ENCODE measurements at regions of chr14 and their contacts with region 1.

Region 1: DNA sequence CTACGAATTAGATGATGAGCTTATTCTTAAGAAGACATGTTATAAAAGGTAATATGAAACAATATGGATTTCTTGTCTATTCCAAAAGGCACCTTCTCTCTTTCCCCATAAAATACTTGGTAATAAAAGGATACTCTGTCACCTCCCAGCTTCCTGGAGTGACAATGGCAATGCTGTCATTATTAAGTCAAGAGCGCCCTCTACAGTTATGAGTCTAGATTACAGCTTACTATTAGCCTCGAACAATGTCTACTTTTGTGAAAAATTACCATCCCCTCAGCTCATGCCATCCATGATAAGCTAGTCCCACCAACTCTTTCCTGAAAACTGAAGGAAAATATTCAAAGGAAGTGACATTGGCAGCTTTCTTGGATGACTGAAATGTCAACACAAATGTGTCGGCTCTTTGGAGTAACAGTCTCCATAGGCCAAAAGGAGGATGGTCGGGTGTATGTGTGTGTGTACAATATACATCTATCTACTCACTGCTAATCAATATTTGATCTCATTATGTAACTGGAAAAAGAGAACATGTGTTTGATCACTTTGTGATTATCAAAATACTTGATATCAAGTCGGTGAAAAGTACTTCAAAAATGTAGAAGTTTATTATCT is 48.7 kb upstream of the CDKN3 start:
- DNase-seq: no peak
- ATAC-seq: peak in 1 of 2 donors; percentile 56

Region 2: GRCh38 chr14:53295985-53296582 is 1052.0 kb before region 1 on chr14:
- intact Hi-C with region 1: loop called in 1 of 2 experiments (anchors 5 kb)
- DNase-seq: no peak
- ATAC-seq: peak in 1 of 2 donors; percentile 30

Region 3: DNA sequence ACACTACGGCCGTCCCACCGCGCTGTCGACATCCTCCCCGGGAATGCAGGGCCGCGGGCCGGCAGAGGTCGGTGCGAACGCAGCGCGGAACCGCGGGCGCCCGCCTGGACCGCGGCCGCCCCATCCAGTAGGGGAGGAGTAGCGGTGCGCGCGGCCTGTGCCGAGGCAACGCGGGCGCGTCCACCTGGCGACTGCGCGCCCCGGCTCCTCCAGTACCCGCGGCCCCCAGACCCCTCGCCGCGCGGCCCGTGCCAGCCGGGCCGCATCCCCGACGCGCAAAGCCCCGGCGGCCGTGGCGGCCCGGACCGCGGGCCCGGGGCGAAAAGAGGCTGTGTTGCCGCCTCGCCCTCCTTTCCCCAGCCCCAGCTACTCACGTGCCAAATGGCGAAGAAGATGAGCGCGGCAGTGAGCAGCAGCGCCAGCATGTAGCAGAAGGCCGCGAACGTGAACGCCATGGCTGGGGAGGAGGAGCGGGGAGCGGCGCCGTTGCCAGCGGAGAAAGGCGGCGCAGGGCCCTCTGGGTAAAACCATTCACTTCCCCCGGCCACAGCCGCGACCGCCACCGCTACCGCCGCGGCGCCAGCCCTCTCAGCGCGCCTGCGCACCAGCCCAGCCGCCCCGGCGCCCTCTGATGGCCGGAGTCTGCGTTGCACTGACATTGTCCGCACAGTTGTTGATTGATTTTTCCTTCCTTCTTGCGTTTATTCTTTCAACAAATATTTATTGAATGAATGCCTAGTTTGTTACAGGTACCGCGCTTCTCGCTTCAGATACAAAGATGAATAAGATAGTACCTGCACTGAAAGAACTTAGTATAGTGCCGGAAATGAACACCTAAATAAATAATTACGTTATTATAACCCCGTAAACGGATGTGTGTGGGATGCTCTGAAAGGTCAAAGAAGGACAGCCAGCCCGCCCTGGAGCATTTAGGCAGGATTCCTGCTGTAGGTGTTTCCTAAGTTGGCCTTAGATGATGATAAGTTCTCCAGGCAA is 93.1 kb after region 1 on chr14 and contains the start of gene CNIH1:
- intact Hi-C with region 1: no loop called
- DNase-seq: peak; percentile 93
- ATAC-seq: peak; percentile 98 to 99
- total RNA-seq, gene CNIH1: 89.5 to 93.4 TPM